MCF 10A (cell line): ENCODE measurements at regions of chr5 and their contacts with region 1.

Region 1: GRCh38 chr5:96614110-96614691 is 48.0 kb upstream of the CAST start:
- DNase-seq: peak; percentile 95
- H3K4me3 Mint-ChIP-seq: peak overlapping the region; percentile 33
- H3K27ac Mint-ChIP-seq: peak overlapping the region; percentile 84
- H3K4me1 Mint-ChIP-seq: peaks cover 22% of the 10 kb centered on the region
- H3K27me3 Mint-ChIP-seq: no peaks in the 10 kb centered on the region
- CTCF ChIP-seq: peak; percentile 66

Region 2: DNA sequence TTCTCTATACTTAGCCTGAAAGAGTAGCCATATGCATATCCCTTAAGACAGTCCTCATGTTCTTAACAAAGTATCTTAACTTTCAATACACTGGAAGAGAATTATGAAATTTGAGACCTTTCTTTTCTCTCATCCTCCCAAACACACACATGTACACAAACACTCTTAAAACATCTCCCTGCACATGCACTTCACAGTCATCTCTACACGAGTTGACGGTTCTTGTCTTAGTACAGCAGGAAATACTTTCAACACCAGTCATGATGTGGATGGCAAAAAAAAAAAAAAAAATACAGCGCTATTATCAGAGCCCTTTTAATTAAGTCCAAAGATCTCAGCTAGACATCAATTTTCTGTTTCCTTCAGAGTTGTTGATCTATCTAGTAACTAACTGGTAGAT is 137.5 kb before region 1 on chr5:
- CTCF ChIA-PET with region 1: no interaction called
- POLR2A ChIA-PET with region 1: no interaction called
- intact Hi-C with region 1: no loop called
- DNase-seq: no peak
- H3K4me3 Mint-ChIP-seq: no peak overlapping the region
- H3K27ac Mint-ChIP-seq: no peak overlapping the region
- H3K4me1 Mint-ChIP-seq: peaks cover 6% of the 10 kb centered on the region
- H3K27me3 Mint-ChIP-seq: no peaks in the 10 kb centered on the region
- CTCF ChIP-seq: no peak

Region 3: GRCh38 chr5:96492654-96493053 is 121.5 kb before region 1 on chr5:
- CTCF ChIA-PET with region 1: no interaction called
- POLR2A ChIA-PET with region 1: no interaction called
- intact Hi-C with region 1: no loop called
- DNase-seq: peak; percentile 95
- H3K4me3 Mint-ChIP-seq: peak overlapping the region; percentile 40
- H3K27ac Mint-ChIP-seq: peak overlapping the region; percentile 96
- H3K4me1 Mint-ChIP-seq: peaks cover 10% of the 10 kb centered on the region
- H3K27me3 Mint-ChIP-seq: no peaks in the 10 kb centered on the region
- CTCF ChIP-seq: no peak

Region 4: GRCh38 chr5:96582343-96582742 is 31.9 kb before region 1 on chr5:
- CTCF ChIA-PET with region 1: no interaction called
- POLR2A ChIA-PET with region 1: no interaction called
- intact Hi-C with region 1: no loop called
- DNase-seq: no peak
- H3K4me3 Mint-ChIP-seq: no peak overlapping the region
- H3K27ac Mint-ChIP-seq: no peak overlapping the region
- H3K4me1 Mint-ChIP-seq: peaks cover 10% of the 10 kb centered on the region
- H3K27me3 Mint-ChIP-seq: no peaks in the 10 kb centered on the region
- CTCF ChIP-seq: no peak

Region 5: DNA sequence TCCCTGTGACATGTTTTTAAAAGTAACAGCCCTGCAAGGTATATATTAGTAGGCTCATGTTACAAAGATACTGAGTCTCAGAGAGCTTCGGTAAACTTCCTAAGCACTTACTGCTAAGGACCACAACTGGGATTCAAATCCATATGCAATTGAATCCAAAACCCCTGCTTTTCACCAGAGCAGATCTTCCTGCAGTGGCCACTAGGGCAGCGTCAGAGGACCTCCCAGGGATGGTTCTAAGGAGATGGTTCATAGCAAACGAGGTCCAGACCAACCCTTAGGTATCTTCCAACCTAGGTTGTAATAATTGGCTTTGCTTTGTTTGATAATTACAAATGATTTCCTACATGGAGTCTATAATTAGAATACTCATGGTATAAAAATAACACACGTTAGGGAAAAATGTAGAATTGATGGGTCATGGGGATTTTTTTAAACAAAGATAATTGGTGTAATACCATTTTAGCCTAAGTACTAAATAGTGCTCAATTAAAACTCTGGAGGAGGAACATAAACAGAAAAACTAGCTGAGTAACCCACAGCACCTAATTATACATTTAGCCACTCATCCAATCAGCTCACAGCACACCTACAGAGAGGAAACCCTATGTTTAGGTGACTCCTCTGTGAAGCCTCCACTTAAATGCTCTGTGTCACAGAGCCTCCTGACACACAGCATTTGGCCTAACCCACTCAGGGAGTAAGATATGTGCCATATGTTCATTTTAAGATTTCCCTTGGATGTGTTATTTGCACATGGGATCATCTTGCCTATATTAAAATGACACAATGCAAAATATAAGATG is 38.0 kb after region 1 on chr5:
- CTCF ChIA-PET with region 1: interaction called, 18 read pairs
- POLR2A ChIA-PET with region 1: interaction called, 12 read pairs
- intact Hi-C with region 1: no loop called
- DNase-seq: peak; percentile 39
- H3K4me3 Mint-ChIP-seq: no peak overlapping the region
- H3K27ac Mint-ChIP-seq: no peak overlapping the region
- H3K4me1 Mint-ChIP-seq: peaks cover 40% of the 10 kb centered on the region
- H3K27me3 Mint-ChIP-seq: no peaks in the 10 kb centered on the region
- CTCF ChIP-seq: peak; percentile 13

Region 6: DNA sequence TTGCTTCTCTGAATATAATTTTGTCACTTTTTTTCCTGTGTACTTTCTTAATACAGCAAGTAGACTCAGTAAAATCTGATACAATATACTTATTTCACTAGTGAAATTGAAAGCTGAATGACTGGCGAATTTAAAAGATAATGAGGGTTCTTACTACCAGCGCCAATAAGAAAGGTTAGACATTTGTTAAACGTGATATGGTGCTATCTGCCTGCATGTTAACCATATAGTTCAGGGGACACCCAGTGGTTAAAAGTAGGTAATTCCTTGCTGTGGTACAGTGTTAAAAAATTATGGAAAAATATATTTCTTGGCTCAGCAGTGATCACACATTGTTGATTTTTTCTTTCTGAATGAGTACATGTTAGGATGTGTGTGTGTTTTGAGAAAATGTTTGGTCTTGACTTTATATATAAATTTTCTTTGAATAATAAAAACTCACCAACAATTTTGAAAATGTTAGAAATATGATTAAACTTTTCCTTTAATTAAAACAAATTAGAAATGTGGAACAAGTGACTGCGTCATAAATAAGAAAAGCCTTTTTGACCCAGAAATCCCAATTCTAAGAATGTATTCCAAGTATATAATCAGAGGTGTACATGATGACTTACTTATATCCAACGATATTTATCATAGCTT is 73.7 kb after region 1 on chr5:
- CTCF ChIA-PET with region 1: interaction called, 164 read pairs
- POLR2A ChIA-PET with region 1: interaction called, 31 read pairs
- intact Hi-C with region 1: loop called (anchors 1 kb)
- DNase-seq: peak; percentile 66
- H3K4me3 Mint-ChIP-seq: peak overlapping the region; percentile 55
- H3K27ac Mint-ChIP-seq: peak overlapping the region; percentile 4
- H3K4me1 Mint-ChIP-seq: peaks cover 38% of the 10 kb centered on the region
- H3K27me3 Mint-ChIP-seq: no peaks in the 10 kb centered on the region
- CTCF ChIP-seq: peak; percentile 49

Region 7: DNA sequence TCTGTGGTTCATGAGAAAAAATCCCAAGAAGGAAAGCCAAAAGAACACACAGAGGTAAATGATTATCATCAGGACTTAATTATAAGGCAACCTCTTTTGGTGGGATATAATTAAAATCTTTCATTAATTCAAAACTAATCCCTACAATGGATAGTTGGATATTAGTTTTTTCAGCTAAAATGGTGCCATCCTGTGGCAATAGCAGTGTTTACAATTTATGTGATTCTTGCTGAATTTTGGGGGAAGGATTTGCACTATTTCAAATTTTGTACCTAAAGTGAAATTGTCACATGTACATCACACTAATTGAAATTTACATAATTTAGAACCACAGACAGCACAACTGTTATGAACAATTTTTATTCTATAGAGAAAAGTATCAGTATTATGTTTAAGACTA is 115.0 kb after region 1 on chr5:
- CTCF ChIA-PET with region 1: interaction called, 32 read pairs
- POLR2A ChIA-PET with region 1: interaction called, 7 read pairs
- intact Hi-C with region 1: loop called (anchors 1 kb)
- DNase-seq: no peak
- H3K4me3 Mint-ChIP-seq: no peak overlapping the region
- H3K27ac Mint-ChIP-seq: no peak overlapping the region
- H3K4me1 Mint-ChIP-seq: peaks cover 12% of the 10 kb centered on the region
- H3K27me3 Mint-ChIP-seq: no peaks in the 10 kb centered on the region
- CTCF ChIP-seq: peak; percentile 34

Region 8: GRCh38 chr5:96934708-96935558 is 320.7 kb after region 1 on chr5:
- CTCF ChIA-PET with region 1: no interaction called
- POLR2A ChIA-PET with region 1: no interaction called
- intact Hi-C with region 1: loop called (anchors 5 kb)
- DNase-seq: peak; percentile 96
- H3K4me3 Mint-ChIP-seq: peak overlapping the region; percentile 96
- H3K27ac Mint-ChIP-seq: peak overlapping the region; percentile 82
- H3K4me1 Mint-ChIP-seq: peaks cover 23% of the 10 kb centered on the region
- H3K27me3 Mint-ChIP-seq: no peaks in the 10 kb centered on the region
- CTCF ChIP-seq: no peak